Naive thymus-derived CD4-positive, alpha-beta T cell (primary cell): ENCODE measurements at regions of chr11 and their contacts with region 1.

Region 1: DNA sequence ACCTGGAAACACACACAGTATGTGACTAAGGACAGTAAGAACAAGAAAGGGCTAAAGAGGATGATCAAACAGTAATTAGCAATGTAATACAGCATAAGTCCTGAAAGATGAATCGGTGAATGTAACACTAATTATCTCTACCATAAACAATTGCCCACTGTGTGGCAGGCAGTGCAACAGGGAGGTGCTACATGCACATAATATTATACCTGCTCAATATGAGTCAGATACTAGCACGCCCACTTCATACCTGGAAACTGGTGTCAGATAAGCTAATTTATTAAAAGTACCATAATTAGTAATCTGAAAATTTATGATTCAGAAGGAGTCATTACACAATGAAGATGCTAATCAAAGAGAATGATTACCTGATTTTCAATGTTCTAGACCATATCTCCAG is 14.9 kb downstream of the CASP12 start:
- DNase-seq: no peak
- ATAC-seq: no peak
- H3K4me3 ChIP-seq: no peak overlapping the region
- H3K4me3 Mint-ChIP-seq: no peak overlapping the region
- H3K27ac ChIP-seq: no peak overlapping the region
- H3K27ac Mint-ChIP-seq: no peak overlapping the region
- H3K4me1 ChIP-seq: no peaks in the 10 kb centered on the region
- H3K4me1 Mint-ChIP-seq: peaks cover 6 to 20% (median 16%) of the 10 kb centered on the region in 7 donors
- H3K27me3 ChIP-seq: no peaks in the 10 kb centered on the region
- H3K27me3 Mint-ChIP-seq: no peaks in the 10 kb centered on the region

Region 2: DNA sequence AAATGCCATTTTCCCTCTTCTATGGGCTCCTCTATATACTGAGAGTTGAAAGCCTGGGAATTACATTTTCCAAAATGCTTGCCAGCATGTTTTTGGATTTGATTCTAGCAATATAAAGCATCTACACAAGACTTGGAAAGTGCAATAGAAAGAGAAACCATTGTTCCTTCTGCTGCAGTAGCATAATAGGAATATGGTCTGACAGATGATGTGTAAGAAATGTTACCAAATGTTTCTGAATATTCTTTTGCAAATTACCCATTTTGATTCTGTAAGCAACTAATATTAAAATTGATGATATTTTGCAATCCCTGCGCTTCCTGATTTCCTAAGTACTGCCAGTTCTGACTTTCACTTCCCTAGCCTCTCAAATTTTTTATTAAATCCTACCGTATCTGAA is 46.7 kb before region 1 on chr11:
- CTCF ChIA-PET with region 1: no interaction called
- POLR2A ChIA-PET with region 1: no interaction called
- intact Hi-C with region 1: no loop called
- DNase-seq: no peak
- ATAC-seq: peak; percentile 24
- H3K4me3 ChIP-seq: no peak overlapping the region
- H3K4me3 Mint-ChIP-seq: no peak overlapping the region
- H3K27ac ChIP-seq: no peak overlapping the region
- H3K27ac Mint-ChIP-seq: no peak overlapping the region
- H3K4me1 ChIP-seq: no peaks in the 10 kb centered on the region
- H3K4me1 Mint-ChIP-seq: peaks cover 0 to 6% (median 0%) of the 10 kb centered on the region in 7 donors
- H3K27me3 ChIP-seq: no peaks in the 10 kb centered on the region
- H3K27me3 Mint-ChIP-seq: peaks cover 0 to 3% (median 0%) of the 10 kb centered on the region in 5 donors

Region 3: DNA sequence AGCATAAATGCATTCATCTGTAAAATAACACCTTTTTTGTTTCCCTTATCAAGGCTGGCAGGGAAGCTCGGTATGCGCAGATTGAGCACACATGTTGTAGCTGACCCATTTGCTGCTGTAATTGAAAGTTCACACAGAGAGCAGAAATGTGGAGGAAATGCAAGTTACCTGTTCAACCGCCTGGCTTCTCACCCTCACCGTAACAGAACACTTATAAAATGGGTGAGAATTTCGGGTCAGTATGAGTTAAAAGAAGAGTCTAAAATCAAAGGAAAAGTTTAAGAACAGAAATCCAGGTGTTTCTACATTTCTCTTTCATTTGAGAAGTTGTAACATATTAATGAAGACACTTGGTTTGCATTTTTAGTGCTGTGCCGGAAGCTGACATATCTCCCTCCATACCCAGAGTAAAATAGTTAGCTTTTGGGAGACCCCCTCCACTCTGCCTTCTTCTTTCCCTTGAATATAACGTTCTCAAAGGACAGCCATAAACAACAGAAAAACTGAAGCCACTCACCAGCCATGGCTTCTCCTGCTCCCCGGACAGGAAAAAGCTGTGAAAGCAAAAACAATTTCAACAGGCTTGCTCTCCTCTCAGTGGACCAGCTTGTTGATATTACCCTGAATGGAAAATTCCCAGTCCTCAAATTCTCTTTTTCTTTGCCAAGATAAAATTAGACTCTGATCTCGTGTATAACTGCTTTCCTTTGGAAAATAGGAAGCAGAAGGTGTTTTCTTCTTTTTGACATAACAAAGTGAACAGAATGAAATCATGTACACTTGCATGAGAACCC is 14.7 kb after region 1 on chr11 and contains the start of gene CASP12:
- CTCF ChIA-PET with region 1: interaction called, 3 read pairs
- POLR2A ChIA-PET with region 1: interaction called, 4 read pairs
- intact Hi-C with region 1: loop called in 1 of 2 experiments (anchors 2 kb)
- DNase-seq: peak in 1 of 9 donors; percentile 12
- ATAC-seq: peak; percentile 51
- H3K4me3 ChIP-seq: peak within 1 kb of the TSS; percentile 34
- H3K4me3 Mint-ChIP-seq: peak within 1 kb of the TSS in 8 of 10 donors; percentile 42 to 73 (median 54)
- H3K27ac ChIP-seq: no peak within 1 kb of the TSS
- H3K27ac Mint-ChIP-seq: peak within 1 kb of the TSS in 8 of 9 donors; percentile 0 to 73 (median 54)
- H3K4me1 ChIP-seq: peaks cover 3 to 23% of the 10 kb centered on the region in 2 donors
- H3K4me1 Mint-ChIP-seq: peaks cover 10 to 30% (median 26%) of the 10 kb centered on the region in 7 donors
- H3K27me3 ChIP-seq: no peaks in the 10 kb centered on the region
- H3K27me3 Mint-ChIP-seq: peaks cover 0 to 2% (median 0%) of the 10 kb centered on the region in 5 donors
- total RNA-seq, gene CASP12: not detected